ENCODE measurements at regions of chr11 and their contacts with region 1.

Region 1: DNA sequence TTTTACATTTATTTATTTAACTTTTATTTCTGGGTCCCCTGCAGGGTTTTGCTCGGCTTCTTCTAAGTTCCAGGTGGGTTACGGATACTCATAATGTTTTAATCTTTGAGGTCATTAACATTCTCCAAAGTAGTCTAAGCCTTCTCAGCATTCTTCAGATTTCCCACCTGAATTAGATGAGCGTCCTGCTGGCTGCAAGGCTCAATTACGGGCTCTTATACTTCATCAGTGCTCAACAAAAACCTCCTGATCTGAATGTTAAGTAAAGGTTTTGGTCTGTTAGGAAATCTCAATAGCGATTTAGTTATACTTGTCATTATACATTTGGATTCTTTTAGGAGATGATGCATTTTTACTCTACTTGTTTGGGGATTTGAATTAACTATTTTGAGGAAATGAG is 27.3 kb upstream of the NFRKB start:
- DNase-seq: no peak
- H3K4me3 ChIP-seq: no peak overlapping the region
- H3K27ac ChIP-seq: no peak overlapping the region
- H3K4me1 ChIP-seq: no peaks in the 10 kb centered on the region
- H3K27me3 ChIP-seq: no peaks in the 10 kb centered on the region
- CTCF ChIP-seq: no peak

Region 2: DNA sequence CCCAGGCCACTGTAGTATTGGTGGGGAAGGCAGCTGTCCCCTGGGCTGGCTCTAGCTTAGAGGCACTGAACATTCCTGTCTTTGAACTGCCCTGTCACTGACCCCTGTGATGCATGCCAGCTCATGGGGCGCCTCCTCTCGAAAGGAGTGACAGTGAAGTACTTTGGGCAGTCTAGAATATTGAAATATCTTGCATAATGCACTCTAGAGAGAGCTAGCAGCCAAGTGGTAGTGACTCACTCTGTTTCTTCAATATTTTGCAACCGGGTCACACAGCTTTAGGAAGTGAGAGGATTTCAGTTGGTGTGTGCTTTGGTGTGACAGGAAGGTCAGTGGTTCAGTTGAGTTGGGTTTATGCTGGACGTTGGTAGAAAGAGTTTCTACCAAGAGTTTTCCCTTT is 201.4 kb after region 1 on chr11:
- CTCF ChIA-PET with region 1: no interaction called
- dilution Hi-C with region 1: no loop called
- in situ Hi-C with region 1: no loop called
- intact Hi-C with region 1: loop called (anchors 2 kb)
- DNase-seq: peak; percentile 89
- H3K4me3 ChIP-seq: no peak overlapping the region
- H3K27ac ChIP-seq: peak overlapping the region; percentile 21
- H3K4me1 ChIP-seq: peaks cover 40% of the 10 kb centered on the region
- H3K27me3 ChIP-seq: no peaks in the 10 kb centered on the region
- CTCF ChIP-seq: peak in 1 of 2 donors; percentile 16

Region 3: DNA sequence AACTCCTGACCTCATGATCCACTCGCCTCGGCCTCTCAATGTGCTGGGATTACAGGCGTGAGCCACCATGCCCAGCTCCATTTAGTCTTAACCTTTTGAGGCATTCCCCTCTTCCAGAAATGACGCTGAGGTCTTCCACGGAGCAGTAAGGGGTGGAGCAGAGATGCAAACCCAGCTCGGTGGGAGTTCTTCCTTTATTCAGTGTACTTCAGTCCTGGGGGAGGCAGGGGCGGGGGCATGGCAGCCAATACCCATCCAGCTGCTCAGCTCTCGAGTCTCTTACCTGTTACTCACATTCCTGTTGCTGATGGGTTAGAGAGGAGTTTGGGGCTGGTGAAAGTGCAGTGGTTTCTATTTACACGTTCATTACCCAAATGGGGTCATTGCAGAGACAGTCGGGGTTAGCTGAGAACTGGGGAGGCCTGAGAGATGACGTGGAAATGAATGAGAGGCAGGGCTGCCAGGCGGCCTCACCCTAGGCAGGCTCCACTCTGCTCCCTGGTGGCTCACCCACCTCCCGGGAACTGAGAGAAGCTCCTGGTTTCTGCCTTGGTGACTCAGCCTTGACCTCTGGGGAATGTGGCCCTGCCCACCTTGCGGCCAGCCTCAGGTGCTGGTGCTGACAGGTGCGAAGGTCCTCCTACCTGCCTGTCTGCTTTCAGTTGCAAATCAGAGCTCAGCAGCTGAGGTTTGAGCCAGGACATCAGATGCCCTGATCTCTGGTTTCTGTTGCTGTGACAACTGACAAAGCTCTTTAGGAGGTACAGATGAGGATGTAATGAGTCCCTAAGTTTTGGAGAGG is 223.5 kb after region 1 on chr11:
- CTCF ChIA-PET with region 1: no interaction called
- dilution Hi-C with region 1: no loop called
- in situ Hi-C with region 1: no loop called
- intact Hi-C with region 1: loop called (anchors 1 kb)
- DNase-seq: peak; percentile 99
- H3K4me3 ChIP-seq: no peak overlapping the region
- H3K27ac ChIP-seq: peak overlapping the region; percentile 76
- H3K4me1 ChIP-seq: peaks cover 12% of the 10 kb centered on the region
- H3K27me3 ChIP-seq: no peaks in the 10 kb centered on the region
- CTCF ChIP-seq: peak; percentile 42 to 73

Region 4: GRCh38 chr11:130197386-130198035 is 274.8 kb after region 1 on chr11:
- CTCF ChIA-PET with region 1: no interaction called
- dilution Hi-C with region 1: no loop called
- in situ Hi-C with region 1: no loop called
- intact Hi-C with region 1: no loop called
- DNase-seq: no peak
- H3K4me3 ChIP-seq: no peak overlapping the region
- H3K27ac ChIP-seq: no peak overlapping the region
- H3K4me1 ChIP-seq: no peaks in the 10 kb centered on the region
- H3K27me3 ChIP-seq: no peaks in the 10 kb centered on the region
- CTCF ChIP-seq: no peak